Activated CD4-positive, alpha-beta T cell treated with anti-CD3 and anti-CD28 coated beads, Interleukin-2, amount 10 ng/mL, durations not matched to agents 24 days and 14 days (primary cell): ENCODE measurements at regions of chr14 and their contacts with region 1.

Region 1: DNA sequence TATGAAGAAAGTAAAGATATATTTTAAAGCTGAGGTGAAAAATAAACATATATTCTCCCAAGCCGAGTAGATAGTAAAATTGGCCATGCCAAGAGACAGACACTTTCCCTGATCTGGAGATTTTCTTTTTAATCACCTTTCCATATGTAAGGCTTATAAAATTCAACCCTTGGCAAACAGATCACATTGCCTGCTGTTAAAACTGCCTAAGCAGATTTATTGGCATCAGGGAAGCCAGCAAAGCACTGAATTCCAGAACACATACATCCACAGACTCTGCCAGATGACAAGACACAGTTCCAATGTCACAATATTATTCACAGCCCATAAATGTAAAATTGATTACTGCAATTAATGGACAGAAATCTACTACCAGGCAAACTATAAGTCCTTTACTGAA is 78.2 kb upstream of the GARIN2 start:
- DNase-seq: no peak
- H3K4me3 Mint-ChIP-seq: no peak overlapping the region
- H3K27ac Mint-ChIP-seq: no peak overlapping the region
- H3K4me1 Mint-ChIP-seq: no peaks in the 10 kb centered on the region
- H3K27me3 Mint-ChIP-seq: no peaks in the 10 kb centered on the region

Region 2: DNA sequence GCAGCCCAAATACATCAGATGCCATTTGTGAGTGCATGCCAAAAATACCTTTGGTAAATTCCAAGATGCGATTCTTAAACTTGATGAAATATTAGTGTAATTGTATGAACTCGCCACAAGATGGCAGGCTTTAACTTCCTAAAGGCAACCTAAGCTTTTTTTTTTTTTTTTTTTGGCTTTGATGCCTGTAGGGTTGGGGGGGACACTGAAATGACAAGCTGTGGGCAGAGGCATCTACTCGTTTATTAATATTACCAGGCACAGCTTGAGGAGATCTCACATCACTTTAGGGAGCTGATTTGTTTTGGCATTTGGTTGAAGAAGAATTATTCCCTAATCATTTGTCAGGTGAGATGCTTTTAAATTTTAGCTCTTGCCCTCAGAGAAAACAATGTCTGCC is 751.5 kb before region 1 on chr14:
- intact Hi-C with region 1: loop called (anchors 5 kb)
- DNase-seq: peak; percentile 70
- H3K4me3 Mint-ChIP-seq: no peak overlapping the region
- H3K27ac Mint-ChIP-seq: no peak overlapping the region
- H3K4me1 Mint-ChIP-seq: peaks cover 1% of the 10 kb centered on the region
- H3K27me3 Mint-ChIP-seq: peaks cover 9% of the 10 kb centered on the region

Region 3: GRCh38 chr14:66495218-66496098 is 615.6 kb before region 1 on chr14:
- intact Hi-C with region 1: loop called (anchors 5 kb)
- DNase-seq: peak; percentile 79
- H3K4me3 Mint-ChIP-seq: no peak overlapping the region
- H3K27ac Mint-ChIP-seq: no peak overlapping the region
- H3K4me1 Mint-ChIP-seq: peaks cover 22% of the 10 kb centered on the region
- H3K27me3 Mint-ChIP-seq: peaks cover 6% of the 10 kb centered on the region

Region 4: DNA sequence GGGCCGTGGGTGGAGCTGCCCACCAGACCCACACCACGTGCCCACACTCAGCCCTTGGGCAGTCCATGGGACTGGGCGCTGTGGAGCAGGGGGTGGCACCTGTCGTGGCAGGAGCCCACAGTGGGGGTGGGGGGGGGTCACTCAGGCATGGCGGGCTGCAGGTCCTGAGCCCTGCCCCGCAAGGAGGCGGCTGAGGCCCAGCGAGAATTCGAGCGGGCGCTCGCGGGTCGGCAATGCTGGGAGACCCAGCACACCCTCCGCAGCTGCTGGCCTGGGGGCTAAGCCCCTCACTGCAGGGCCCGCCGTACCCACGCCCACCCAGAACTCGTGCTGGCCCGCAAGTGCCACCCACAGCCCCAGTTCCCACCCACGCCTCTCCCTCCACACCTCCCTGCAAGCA is 54.3 kb before region 1 on chr14:
- intact Hi-C with region 1: no loop called
- DNase-seq: no peak
- H3K4me3 Mint-ChIP-seq: no peak overlapping the region
- H3K27ac Mint-ChIP-seq: no peak overlapping the region
- H3K4me1 Mint-ChIP-seq: no peaks in the 10 kb centered on the region
- H3K27me3 Mint-ChIP-seq: no peaks in the 10 kb centered on the region